Activated naive CD8-positive, alpha-beta T cell treated with anti-CD3 and anti-CD28 coated beads, Interleukin-2, amount 10 ng/mL, durations not matched to agents 7 days and 5 days (primary cell): ENCODE measurements at regions of chr19 and their contacts with region 1.

Region 1: DNA sequence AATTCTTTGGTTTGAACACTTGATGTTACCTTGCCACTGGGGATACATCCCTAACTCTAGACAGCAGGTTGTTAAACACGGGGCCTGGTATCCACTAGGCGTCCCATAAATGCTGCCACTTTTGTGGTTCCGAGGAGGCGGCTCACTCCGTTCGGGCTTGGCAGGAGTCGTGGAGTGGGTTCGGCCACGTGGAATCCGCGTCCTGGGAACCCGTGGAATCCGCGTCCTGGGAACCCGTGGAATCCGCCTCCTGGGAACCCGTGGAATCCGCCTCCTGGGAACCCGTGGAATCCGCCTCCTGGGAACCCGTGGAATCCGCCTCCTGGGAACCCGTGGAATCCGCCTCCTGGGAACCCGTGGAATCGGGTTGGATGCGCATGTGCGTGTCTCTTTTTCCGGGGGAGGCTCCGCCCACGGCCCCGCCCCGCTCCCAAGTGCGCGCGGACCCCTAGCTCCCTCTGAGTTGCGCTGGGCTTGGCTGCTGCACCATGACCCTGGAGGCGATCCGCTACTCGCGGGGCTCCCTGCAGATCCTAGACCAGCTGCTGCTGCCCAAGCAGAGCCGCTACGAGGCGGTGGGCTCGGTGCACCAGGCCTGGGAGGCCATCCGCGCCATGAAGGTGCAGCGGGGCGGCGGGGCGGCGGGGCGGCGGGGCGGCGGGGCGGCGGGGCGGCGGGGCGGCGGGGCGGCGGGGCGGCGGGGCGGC is at the start of gene MRI1:
- DNase-seq: peak; percentile 80
- ATAC-seq: peak; percentile 82
- H3K4me3 Mint-ChIP-seq: peak within 1 kb of the TSS; percentile 91
- H3K27ac Mint-ChIP-seq: peak within 1 kb of the TSS; percentile 85
- H3K4me1 Mint-ChIP-seq: peaks cover 8% of the 10 kb centered on the region
- H3K27me3 Mint-ChIP-seq: no peaks in the 10 kb centered on the region
- total RNA-seq, gene MRI1: 63.5 to 65.3 TPM

Region 2: DNA sequence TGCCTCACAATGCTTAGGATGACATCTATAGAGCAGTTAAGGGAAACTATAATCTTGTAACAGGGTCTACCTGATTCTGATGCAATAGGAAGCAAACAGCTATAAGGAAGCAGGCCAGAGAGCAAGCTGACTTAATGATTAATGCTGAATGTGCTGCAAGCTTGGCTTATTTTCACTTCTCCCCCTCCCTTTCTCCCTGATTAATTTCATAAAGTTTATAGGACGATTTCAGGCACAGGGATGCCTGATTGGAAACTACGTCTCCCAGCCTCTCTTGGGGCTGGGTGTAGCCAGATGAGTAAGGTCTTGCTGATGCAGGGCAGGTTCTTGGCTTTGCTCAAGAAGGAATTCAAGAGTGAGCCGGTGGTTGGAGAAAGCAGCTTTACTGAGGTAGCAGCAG is 82.7 kb before region 1 on chr19:
- POLR2A ChIA-PET with region 1: no interaction called
- DNase-seq: no peak
- ATAC-seq: no peak
- H3K4me3 Mint-ChIP-seq: no peak overlapping the region
- H3K27ac Mint-ChIP-seq: no peak overlapping the region
- H3K4me1 Mint-ChIP-seq: no peaks in the 10 kb centered on the region
- H3K27me3 Mint-ChIP-seq: peaks cover under 1% of the 10 kb centered on the region

Region 3: GRCh38 chr19:13723206-13723605 is 41.0 kb before region 1 on chr19:
- POLR2A ChIA-PET with region 1: no interaction called
- DNase-seq: no peak
- ATAC-seq: no peak
- H3K4me3 Mint-ChIP-seq: no peak overlapping the region
- H3K27ac Mint-ChIP-seq: no peak overlapping the region
- H3K4me1 Mint-ChIP-seq: no peaks in the 10 kb centered on the region
- H3K27me3 Mint-ChIP-seq: peaks cover 5% of the 10 kb centered on the region

Region 4: GRCh38 chr19:13741893-13742292 is 22.4 kb before region 1 on chr19:
- POLR2A ChIA-PET with region 1: no interaction called
- DNase-seq: no peak
- ATAC-seq: no peak
- H3K4me3 Mint-ChIP-seq: no peak overlapping the region
- H3K27ac Mint-ChIP-seq: no peak overlapping the region
- H3K4me1 Mint-ChIP-seq: peaks cover 4% of the 10 kb centered on the region
- H3K27me3 Mint-ChIP-seq: no peaks in the 10 kb centered on the region

Region 5: GRCh38 chr19:13774217-13775191 is 10.2 kb after region 1 on chr19 and contains the start of gene C19orf53:
- POLR2A ChIA-PET with region 1: interaction called, 25 read pairs
- DNase-seq: peak; percentile 84
- ATAC-seq: peak; percentile 95
- H3K4me3 Mint-ChIP-seq: peak within 1 kb of the TSS; percentile 96
- H3K27ac Mint-ChIP-seq: peak within 1 kb of the TSS; percentile 92
- H3K4me1 Mint-ChIP-seq: peaks cover 19% of the 10 kb centered on the region
- H3K27me3 Mint-ChIP-seq: no peaks in the 10 kb centered on the region
- total RNA-seq, gene C19orf53: 85.2 to 88.1 TPM